ENCODE measurements at regions of chr7 and their contacts with region 1.

Region 1: GRCh38 chr7:75795831-75796285 is 17.7 kb downstream of the CCL24 start:
- DNase-seq: no peak
- H3K4me3 ChIP-seq: no peak overlapping the region
- H3K4me3 Mint-ChIP-seq: no peak overlapping the region
- H3K27ac ChIP-seq: peak overlapping the region; percentile 51
- H3K27ac Mint-ChIP-seq: peak overlapping the region in 1 of 8 donors; percentile 34
- H3K4me1 ChIP-seq: no peaks in the 10 kb centered on the region
- H3K4me1 Mint-ChIP-seq: no peaks in the 10 kb centered on the region
- H3K27me3 ChIP-seq: no peaks in the 10 kb centered on the region
- H3K27me3 Mint-ChIP-seq: peaks cover 5 to 21% of the 10 kb centered on the region in 2 donors

Region 2: DNA sequence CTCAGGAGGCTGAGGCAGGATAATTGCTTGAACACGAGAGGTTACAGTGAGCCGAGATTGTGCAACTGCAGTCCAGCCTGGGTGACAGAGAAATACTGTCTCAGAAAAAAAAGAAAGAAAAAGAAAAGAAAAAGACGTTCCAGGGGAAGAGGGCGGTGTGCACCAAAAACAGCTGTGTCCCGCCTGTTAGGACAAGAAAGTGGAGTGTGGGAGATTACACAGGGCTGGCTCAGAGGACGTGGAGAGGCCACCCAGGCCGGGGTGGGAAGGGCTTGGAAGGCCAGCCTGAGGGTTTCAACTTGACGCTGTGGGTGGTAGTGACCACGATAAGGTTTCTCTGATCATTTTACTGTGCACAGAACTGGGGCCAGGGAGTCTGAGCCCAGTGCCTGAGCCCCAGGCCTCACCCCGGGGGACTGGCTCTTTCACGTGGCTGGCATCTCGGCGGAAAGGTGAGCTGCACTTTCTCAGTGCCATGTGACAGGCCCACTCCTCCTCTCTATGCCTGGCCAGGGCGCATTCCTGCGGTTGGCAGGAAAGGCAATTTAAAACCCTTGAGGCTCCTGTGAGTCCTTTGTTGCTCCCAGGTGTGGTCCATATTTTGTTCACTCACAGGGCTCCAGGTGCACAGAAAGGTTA is 96.9 kb after region 1 on chr7:
- CTCF ChIA-PET with region 1: no interaction called
- POLR2A ChIA-PET with region 1: interaction called, 13 read pairs
- DNase-seq: no peak
- H3K4me3 ChIP-seq: no peak overlapping the region
- H3K4me3 Mint-ChIP-seq: no peak overlapping the region
- H3K27ac ChIP-seq: no peak overlapping the region
- H3K27ac Mint-ChIP-seq: no peak overlapping the region
- H3K4me1 ChIP-seq: no peaks in the 10 kb centered on the region
- H3K4me1 Mint-ChIP-seq: no peaks in the 10 kb centered on the region
- H3K27me3 ChIP-seq: no peaks in the 10 kb centered on the region
- H3K27me3 Mint-ChIP-seq: no peaks in the 10 kb centered on the region